ENCODE measurements at regions of chr3 and their contacts with region 1.

Region 1: DNA sequence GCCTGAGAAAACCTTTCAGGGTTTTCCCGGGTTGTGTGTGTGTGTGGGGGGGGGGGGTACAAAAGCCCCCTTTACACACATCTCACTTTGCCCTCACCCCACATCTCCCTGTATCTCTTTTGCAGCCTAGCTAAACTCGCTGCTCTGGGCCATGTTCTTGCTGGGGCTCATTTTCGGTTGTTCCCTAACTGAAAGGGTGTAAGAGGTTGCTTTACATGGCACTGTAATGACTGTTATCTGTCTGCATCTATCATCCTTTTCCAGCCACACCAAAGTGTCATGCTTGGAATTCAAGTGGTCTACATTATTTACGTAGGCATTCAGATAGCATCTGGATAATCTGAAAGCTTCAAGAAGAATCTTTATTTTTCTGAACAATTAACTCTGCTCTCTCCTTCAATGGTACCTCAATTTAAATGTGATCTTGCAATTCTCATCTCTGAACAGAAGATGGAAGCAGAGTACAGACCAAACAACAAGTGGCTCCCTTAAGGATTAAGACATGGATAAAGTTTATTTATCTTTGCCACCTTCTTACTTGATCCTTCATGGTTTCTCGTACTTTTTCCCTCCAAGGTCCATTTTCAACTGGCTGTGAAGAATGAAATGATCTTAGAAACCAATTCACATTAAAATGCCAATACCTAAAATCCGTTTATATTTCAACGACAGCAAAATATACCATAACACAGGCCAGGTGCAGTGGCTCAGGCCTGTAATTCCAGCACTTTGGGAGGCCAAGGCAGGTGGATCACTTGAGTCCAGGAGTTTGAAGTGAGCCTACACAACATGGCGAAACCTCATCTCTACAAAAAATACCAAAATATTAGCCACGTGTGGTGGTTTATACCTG is 34.9 kb downstream of the DCLK3 start:
- DNase-seq: peak in 2 of 42 donors; percentile 22 to 40

Region 2: DNA sequence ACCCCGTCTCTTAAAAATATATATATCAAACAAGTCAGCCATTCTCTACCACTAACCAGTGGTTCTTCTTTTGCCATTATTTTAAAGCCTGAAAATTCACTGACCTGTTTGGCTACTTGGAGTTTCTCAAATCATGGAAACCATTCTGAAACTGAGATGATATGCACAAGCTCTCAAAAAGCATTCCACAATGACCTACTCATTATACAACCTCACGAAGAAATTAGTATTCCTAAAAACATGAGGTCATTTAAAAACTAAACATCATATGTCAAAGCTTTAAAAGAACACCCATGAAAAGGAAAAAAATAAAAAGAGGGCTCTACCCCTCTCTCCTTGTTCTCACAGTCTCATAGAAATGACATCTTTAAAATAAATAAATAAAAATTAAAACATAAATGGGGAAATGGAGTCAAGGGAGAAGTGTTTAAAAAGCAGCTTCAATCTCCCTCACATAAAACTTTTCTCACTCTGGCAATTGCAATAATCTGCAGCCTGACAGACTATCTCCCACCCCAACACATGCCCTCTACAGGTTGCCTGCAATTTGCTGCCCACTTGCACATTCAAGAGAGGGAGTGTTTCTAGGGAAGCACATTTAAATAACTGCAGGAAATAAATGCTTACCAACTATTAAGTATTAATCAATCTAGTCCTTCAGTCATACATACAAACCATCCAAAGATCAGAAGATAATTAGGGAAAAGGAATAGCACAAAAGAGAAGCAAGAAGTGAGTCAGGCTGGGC is 142.1 kb after region 1 on chr3:
- intact Hi-C with region 1: loop called (anchors 5 kb)
- DNase-seq: peak in 1 of 42 donors; percentile 37

Region 3: GRCh38 chr3:36957862-36958686 is 228.6 kb after region 1 on chr3:
- intact Hi-C with region 1: loop called (anchors 10 kb)
- DNase-seq: peak in 2 of 42 donors; percentile 26 to 34

Measured in head of caudate nucleus (tissue), 42 donors.